CD4-positive, alpha-beta memory T cell (primary cell): ENCODE measurements at regions of chr18 and their contacts with region 1.

Region 1: DNA sequence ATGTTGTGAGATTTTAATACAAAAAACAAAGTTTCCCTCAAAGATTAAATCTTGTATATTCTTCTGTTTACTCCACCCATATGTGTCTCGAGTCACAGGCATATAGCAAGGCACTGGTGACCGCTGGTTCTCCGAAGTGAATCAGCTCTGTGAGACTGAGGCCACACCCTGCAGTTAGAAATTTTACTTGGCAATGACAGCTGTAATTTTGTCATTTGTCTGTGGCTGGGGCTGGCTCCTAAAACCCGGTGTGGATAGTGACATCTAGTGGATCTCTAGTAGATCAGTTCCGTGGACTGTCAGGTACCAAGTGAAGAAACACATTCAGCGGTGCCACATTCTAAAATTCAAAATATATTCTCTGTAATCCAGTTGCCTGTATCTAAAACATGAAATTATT is 278.0 kb downstream of the NEDD4L start:
- DNase-seq: peak; percentile 45 to 72 (median 70)
- H3K4me3 ChIP-seq: no peak overlapping the region
- H3K4me3 Mint-ChIP-seq: peak overlapping the region in 7 of 8 donors; percentile 36 to 88 (median 72)
- H3K27ac ChIP-seq: no peak overlapping the region
- H3K27ac Mint-ChIP-seq: peak overlapping the region; percentile 26 to 92 (median 53)
- H3K4me1 ChIP-seq: peaks cover 11% of the 10 kb centered on the region
- H3K4me1 Mint-ChIP-seq: peaks cover 12 to 21% (median 17%) of the 10 kb centered on the region in 4 donors
- H3K27me3 ChIP-seq: no peaks in the 10 kb centered on the region
- H3K27me3 Mint-ChIP-seq: peaks cover 4% of the 10 kb centered on the region in 2 donors

Region 2: DNA sequence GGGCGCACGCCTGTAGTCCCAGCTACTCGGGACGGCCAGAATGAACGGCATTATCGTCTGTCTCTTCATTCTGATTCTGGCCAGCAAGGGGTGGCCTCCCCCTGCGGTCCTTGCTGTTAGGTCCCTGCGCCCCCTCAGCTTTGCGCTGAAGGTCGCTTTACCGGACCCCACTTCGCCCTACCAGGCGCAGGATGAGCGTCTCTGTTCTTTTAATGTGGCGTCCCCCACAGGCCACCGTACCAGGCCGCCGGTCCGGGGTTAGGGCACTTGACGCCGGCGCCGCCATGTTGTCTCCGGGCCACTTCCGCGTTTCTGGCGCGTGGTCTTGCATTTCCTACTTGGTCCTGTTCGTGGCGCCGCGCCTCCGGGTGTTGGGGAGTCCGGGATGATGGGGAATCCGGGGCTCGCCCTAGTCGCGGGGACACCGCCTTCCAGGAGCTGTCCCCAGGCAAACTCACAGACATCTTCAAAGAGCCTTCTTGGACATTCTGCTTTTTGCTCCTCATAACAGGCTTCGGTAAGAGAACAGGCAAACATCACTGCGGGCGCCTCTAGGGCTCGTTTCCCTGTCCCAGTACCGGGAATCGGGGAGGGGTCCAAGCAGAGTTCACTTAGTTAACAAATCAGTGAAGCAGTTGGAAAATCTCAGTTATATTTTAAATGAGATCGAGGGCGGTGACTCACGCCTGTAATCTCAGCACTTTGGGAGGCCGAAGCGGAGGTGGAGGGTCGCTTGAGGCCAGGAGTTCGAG is 691.8 kb before region 1 on chr18:
- CTCF ChIA-PET with region 1: no interaction called
- POLR2A ChIA-PET with region 1: no interaction called
- intact Hi-C with region 1: loop called (anchors 2 kb)
- DNase-seq: peak; percentile 92 to 94 (median 93)
- H3K4me3 ChIP-seq: peak overlapping the region; percentile 66 to 72
- H3K4me3 Mint-ChIP-seq: peak overlapping the region; percentile 97 to 99 (median 98)
- H3K27ac ChIP-seq: peak overlapping the region; percentile 81
- H3K27ac Mint-ChIP-seq: peak overlapping the region; percentile 94 to 99 (median 98)
- H3K4me1 ChIP-seq: peaks cover 22% of the 10 kb centered on the region
- H3K4me1 Mint-ChIP-seq: peaks cover 11 to 20% (median 17%) of the 10 kb centered on the region in 4 donors
- H3K27me3 ChIP-seq: no peaks in the 10 kb centered on the region
- H3K27me3 Mint-ChIP-seq: no peaks in the 10 kb centered on the region

Region 3: DNA sequence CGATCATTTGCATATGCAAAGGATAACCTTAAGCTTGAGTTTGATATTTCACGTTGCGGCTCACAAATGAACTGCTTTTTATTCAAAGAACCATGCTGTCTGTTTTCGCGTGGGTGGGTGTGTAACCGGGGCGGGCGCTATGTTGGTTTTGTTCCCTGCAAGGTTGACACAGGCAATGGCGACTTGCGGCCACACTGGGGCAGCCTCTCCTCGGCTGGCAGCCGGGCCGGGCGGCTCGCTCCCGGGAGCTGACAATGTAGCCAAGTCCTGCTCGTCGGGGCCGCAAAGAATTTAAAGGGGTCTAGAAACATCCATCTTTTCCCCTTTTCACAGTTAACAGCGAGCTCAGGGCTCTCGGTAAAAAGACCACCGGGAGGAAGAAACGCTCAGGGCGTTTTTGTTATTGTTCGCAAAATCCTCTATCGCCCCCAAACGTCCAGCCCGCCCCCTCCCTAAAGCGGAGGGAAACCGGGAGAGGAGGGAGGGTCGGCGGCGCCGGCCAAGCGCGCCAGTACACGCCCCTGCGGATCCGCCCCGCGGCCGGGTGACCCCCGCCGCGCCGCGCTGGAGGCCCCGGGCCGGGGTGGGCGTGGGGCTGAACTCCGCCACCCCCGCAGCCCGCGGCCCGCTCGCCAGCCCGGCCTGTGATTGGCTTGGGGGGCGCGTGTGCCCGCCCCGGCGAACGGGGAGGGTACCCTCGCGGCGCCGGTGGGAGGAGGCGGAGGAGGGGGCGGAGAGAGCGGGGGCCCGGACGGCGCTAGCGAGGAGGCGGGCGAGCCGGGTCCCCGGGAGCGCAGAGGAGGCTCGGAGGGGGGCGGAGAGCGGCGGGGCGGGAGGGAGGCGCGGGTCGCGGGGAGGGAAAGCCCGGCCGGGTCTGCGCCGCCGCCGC is 278.3 kb before region 1 on chr18 and contains the start of gene NEDD4L:
- CTCF ChIA-PET with region 1: no interaction called
- POLR2A ChIA-PET with region 1: no interaction called
- intact Hi-C with region 1: loop called (anchors 1 kb)
- DNase-seq: peak; percentile 62 to 78 (median 65)
- H3K4me3 ChIP-seq: peak within 1 kb of the TSS; percentile 52 to 54
- H3K4me3 Mint-ChIP-seq: peak within 1 kb of the TSS; percentile 89 to 96 (median 93)
- H3K27ac ChIP-seq: no peak within 1 kb of the TSS
- H3K27ac Mint-ChIP-seq: peak within 1 kb of the TSS; percentile 41 to 85 (median 82)
- H3K4me1 ChIP-seq: peaks cover 19% of the 10 kb centered on the region
- H3K4me1 Mint-ChIP-seq: peaks cover 18 to 35% (median 26%) of the 10 kb centered on the region in 4 donors
- H3K27me3 ChIP-seq: no peaks in the 10 kb centered on the region
- H3K27me3 Mint-ChIP-seq: peaks cover 9 to 16% of the 10 kb centered on the region in 2 donors
- total RNA-seq, gene NEDD4L: 2.8 to 3.5 TPM

Region 4: GRCh38 chr18:58180738-58181353 is 141.1 kb before region 1 on chr18:
- CTCF ChIA-PET with region 1: interaction called, 20 read pairs
- POLR2A ChIA-PET with region 1: no interaction called
- intact Hi-C with region 1: loop called (anchors 1 kb)
- DNase-seq: peak; percentile 36 to 55 (median 46)
- H3K4me3 ChIP-seq: no peak overlapping the region
- H3K4me3 Mint-ChIP-seq: no peak overlapping the region
- H3K27ac ChIP-seq: no peak overlapping the region
- H3K27ac Mint-ChIP-seq: no peak overlapping the region
- H3K4me1 ChIP-seq: no peaks in the 10 kb centered on the region
- H3K4me1 Mint-ChIP-seq: peaks cover 0 to 4% (median 2%) of the 10 kb centered on the region in 4 donors
- H3K27me3 ChIP-seq: no peaks in the 10 kb centered on the region
- H3K27me3 Mint-ChIP-seq: peaks cover 3 to 5% of the 10 kb centered on the region in 2 donors

Region 5: GRCh38 chr18:58303363-58303762 is 18.6 kb before region 1 on chr18:
- CTCF ChIA-PET with region 1: interaction called, 19 read pairs
- POLR2A ChIA-PET with region 1: interaction called, 3 read pairs
- intact Hi-C with region 1: loop called (anchors 2 kb)
- DNase-seq: peak in 4 of 5 donors; percentile 36 to 59 (median 37)
- H3K4me3 ChIP-seq: no peak overlapping the region
- H3K4me3 Mint-ChIP-seq: peak overlapping the region in 6 of 8 donors; percentile 1 to 66 (median 58)
- H3K27ac ChIP-seq: no peak overlapping the region
- H3K27ac Mint-ChIP-seq: peak overlapping the region in 6 of 7 donors; percentile 14 to 91 (median 60)
- H3K4me1 ChIP-seq: peaks cover 23% of the 10 kb centered on the region
- H3K4me1 Mint-ChIP-seq: peaks cover 7 to 32% (median 19%) of the 10 kb centered on the region in 4 donors
- H3K27me3 ChIP-seq: no peaks in the 10 kb centered on the region
- H3K27me3 Mint-ChIP-seq: no peaks in the 10 kb centered on the region